ENCODE measurements at regions of chr15 and their contacts with region 1.

Region 1: GRCh38 chr15:55407949-55408791 is at the starts of genes CCPG1 and PIERCE2:
- H3K4me3 ChIP-seq: peak within 1 kb of the TSS; percentile 59
- H3K27ac ChIP-seq: peak within 1 kb of the TSS; percentile 82
- H3K4me1 ChIP-seq: no peaks in the 10 kb centered on the region
- CTCF ChIP-seq: peak; percentile 95

Region 2: DNA sequence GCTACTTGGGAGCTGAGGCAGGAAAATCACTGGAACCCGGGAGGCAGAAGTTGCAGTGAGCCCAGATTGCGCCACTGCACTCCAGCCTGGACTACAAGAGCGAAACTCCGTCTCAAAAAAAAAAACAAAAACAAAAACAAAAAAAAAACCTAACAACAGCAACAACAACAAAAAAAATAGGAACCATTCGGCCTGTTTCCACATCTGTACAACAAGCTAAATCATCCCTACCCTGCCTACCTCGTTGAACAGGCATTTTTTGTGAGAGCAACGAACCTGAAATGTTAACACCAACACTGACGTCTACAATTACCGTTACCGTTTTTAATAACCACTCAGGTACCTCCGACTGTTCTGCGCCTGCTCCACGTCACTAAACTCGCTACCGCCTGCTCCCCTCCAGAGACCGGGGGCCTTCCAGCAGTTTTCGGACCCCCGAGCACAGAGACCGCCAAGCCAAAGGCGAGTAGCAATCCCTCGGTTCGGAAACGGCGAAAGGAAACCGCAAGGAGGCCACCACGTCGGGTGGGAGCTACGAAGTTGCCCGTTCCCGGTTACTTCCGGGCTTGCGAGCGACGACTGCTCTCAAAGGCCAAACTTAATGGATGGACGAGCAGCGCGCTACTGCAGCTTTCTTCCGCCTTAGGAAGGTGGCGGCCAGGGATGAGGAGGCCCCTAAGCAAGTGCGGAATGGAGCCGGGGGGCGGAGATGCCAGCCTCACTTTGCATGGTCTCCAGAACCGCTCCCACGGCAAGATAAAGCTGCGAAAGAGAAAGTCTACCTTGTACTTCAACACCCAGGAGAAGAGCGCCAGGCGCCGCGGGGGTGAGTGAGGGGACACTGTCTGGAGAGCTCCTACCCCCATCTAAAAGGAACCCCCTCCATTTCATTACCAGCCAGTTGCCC is 89.3 kb before region 1 on chr15 and contains the starts of genes PIGB and PIGBOS1:
- CTCF ChIA-PET with region 1: no interaction called
- POLR2A ChIA-PET with region 1: interaction called, 12 read pairs
- H3K4me3 ChIP-seq: peak within 1 kb of the TSS; percentile 71
- H3K27ac ChIP-seq: peak within 1 kb of the TSS; percentile 73
- H3K4me1 ChIP-seq: no peaks in the 10 kb centered on the region
- CTCF ChIP-seq: peak; percentile 14; the same call in 1 of the 2 replicates

Measured in HEK293 (cell line).